ENCODE measurements at regions of chr12 and their contacts with region 1.

Region 1: GRCh38 chr12:121364683-121365121 is 12.5 kb upstream of the ANAPC5 start:
- DNase-seq: peak; percentile 78
- H3K4me3 ChIP-seq: no peak overlapping the region
- H3K27ac ChIP-seq: peak overlapping the region; percentile 14
- H3K4me1 ChIP-seq: peaks cover 13% of the 10 kb centered on the region
- H3K27me3 ChIP-seq: no peaks in the 10 kb centered on the region
- CTCF ChIP-seq: no peak

Region 2: DNA sequence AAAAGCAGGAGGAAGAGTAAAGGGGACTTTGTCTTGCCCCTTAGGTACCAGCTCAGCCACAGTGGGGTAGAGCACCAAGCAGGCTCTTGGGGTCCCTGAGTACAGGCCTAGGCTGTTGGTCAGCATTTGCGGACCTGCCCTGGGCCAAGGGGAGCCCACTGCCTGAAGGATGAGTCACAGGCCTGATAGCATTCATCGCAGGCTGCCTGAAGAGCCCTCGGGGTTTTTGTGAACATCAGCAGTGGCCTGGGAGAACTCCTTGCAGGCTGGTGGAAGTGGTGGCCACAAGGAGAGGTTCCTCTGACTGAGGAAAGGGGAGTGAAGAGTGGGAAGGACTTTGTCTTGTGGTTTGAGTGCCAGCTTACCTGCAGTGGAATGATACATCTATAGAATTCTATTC is 257.0 kb before region 1 on chr12:
- CTCF ChIA-PET with region 1: no interaction called
- dilution Hi-C with region 1: no loop called
- in situ Hi-C with region 1: no loop called
- intact Hi-C with region 1: no loop called
- DNase-seq: no peak
- H3K4me3 ChIP-seq: no peak overlapping the region
- H3K27ac ChIP-seq: no peak overlapping the region
- H3K4me1 ChIP-seq: no peaks in the 10 kb centered on the region
- H3K27me3 ChIP-seq: no peaks in the 10 kb centered on the region
- CTCF ChIP-seq: no peak

Region 3: GRCh38 chr12:121318121-121318520 is 46.6 kb before region 1 on chr12:
- CTCF ChIA-PET with region 1: no interaction called
- dilution Hi-C with region 1: loop called (anchors 5 kb)
- in situ Hi-C with region 1: no loop called
- intact Hi-C with region 1: no loop called
- DNase-seq: no peak
- H3K4me3 ChIP-seq: no peak overlapping the region
- H3K27ac ChIP-seq: no peak overlapping the region
- H3K4me1 ChIP-seq: no peaks in the 10 kb centered on the region
- H3K27me3 ChIP-seq: no peaks in the 10 kb centered on the region
- CTCF ChIP-seq: no peak

Region 4: DNA sequence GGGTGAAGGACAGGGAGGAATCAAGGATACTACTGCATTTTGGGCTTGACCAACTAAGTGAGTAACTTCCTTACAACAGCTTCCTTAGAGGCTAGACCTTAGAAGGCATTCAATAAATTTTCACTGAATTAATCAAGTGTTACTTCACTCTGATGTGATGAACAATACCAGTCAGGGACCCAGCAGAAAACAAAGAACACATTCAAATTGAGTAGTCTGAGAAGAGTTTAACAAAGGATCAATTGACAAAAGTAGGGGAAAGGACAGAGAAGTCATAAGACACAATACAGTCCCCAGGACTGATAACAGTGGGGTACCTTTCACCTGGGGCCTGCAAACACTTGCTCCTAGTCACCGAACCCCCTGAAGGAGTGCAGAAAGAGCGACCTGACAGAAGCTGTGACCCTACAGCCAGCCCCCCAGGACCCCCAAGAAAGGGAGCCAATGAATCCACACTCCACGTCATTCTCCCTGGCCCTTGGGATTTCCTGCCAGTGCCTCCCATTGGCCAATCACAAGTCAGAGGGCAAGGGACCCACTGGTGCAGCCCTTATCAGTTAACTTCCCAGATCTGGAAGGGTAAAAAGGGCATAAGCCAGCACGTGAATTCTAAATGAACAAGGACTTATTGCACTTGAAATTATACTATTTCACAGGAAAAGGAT is 19.4 kb before region 1 on chr12:
- CTCF ChIA-PET with region 1: interaction called, 18 read pairs
- dilution Hi-C with region 1: no loop called
- in situ Hi-C with region 1: no loop called
- intact Hi-C with region 1: no loop called
- DNase-seq: peak; percentile 51
- H3K4me3 ChIP-seq: no peak overlapping the region
- H3K27ac ChIP-seq: no peak overlapping the region
- H3K4me1 ChIP-seq: no peaks in the 10 kb centered on the region
- H3K27me3 ChIP-seq: no peaks in the 10 kb centered on the region
- CTCF ChIP-seq: no peak

Region 5: DNA sequence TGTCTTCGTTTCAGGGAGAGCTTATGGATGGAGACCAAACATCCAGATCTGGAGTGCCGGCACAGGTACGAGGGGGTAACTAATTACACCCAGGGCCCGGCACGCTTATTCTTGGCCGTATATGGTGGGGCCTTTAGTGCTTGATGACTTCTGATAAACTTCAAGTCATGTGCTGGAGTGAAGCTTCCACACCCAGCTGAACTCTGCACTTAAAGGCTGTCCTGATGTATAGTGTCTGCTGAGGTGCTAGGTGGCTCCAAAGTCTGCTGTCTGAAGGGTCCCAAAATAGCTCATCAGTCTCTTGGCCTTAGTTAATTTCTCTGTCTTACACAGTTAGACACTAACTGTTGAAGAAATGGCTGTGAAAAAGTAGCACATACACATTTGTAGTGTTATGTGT is 53.1 kb after region 1 on chr12:
- CTCF ChIA-PET with region 1: no interaction called
- dilution Hi-C with region 1: loop called (anchors 5 kb)
- in situ Hi-C with region 1: no loop called
- intact Hi-C with region 1: no loop called
- DNase-seq: no peak
- H3K4me3 ChIP-seq: no peak overlapping the region
- H3K27ac ChIP-seq: no peak overlapping the region
- H3K4me1 ChIP-seq: no peaks in the 10 kb centered on the region
- H3K27me3 ChIP-seq: no peaks in the 10 kb centered on the region
- CTCF ChIP-seq: no peak

Region 6: DNA sequence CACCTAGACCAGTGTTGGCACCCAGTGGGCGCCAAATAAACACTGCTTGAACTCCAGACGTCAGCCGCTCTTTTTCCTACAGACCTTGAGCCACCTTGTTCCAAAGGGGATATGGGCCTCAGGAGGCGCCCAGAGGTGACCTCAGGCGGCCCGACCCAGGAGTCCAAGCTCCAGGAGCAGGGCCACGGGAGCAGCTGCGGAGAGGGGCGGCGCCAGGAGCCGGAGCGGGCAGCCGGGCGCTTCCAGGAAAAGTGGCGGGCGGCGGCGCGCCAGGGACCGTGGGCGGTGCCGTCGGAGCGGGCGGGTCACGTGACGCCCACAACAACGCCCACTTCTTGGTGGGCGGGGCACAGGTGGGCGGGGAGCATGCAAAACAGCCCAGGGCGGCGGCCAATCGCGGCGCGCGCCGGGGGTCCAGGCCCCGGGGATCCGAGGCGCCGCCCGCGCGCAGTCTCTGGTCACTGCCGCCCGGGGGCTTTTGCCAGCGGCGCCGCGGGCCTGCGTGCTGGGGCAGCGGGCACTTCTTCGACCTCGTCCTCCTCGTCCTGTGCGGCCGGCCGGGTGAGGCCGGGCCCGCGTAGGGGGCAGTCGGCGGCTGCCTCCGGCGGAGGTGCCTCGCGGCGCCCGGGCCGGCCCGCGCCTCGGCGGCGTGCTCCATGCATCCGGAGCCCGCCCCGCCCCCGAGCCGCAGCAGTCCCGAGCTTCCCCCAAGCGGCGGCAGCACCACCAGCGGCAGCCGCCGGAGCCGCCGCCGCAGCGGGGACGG is 261.6 kb after region 1 on chr12 and contains the start of gene ORAI1:
- CTCF ChIA-PET with region 1: no interaction called
- dilution Hi-C with region 1: no loop called
- in situ Hi-C with region 1: no loop called
- intact Hi-C with region 1: no loop called
- DNase-seq: peak; percentile 87
- H3K4me3 ChIP-seq: peak within 1 kb of the TSS; percentile 51 to 70 (median 58)
- H3K27ac ChIP-seq: peak within 1 kb of the TSS; percentile 66
- H3K4me1 ChIP-seq: peaks cover 21% of the 10 kb centered on the region
- H3K27me3 ChIP-seq: no peaks in the 10 kb centered on the region
- CTCF ChIP-seq: no peak
- total RNA-seq, gene ORAI1: 3.3 to 23.1 TPM